ENCODE measurements at regions of chr10 and their contacts with region 1.

Region 1: GRCh38 chr10:122435212-122435827 is 19.1 kb upstream of the ARMS2 start:
- DNase-seq: no peak
- H3K4me3 ChIP-seq: no peak overlapping the region
- H3K27ac ChIP-seq: no peak overlapping the region
- H3K4me1 ChIP-seq: no peaks in the 10 kb centered on the region
- H3K27me3 ChIP-seq: no peaks in the 10 kb centered on the region
- CTCF ChIP-seq: peak; percentile 35 to 70 (median 63)
- EP300 ChIP-seq: no peak
- POLR2A ChIP-seq: no peak

Region 2: GRCh38 chr10:122298598-122299301 is 136.6 kb before region 1 on chr10:
- intact Hi-C with region 1: loop called in 3 of 4 experiments (anchors 5 kb)
- DNase-seq: peak; percentile 69 to 87 (median 84)
- H3K4me3 ChIP-seq: peak overlapping the region; percentile 21
- H3K27ac ChIP-seq: no peak overlapping the region
- H3K4me1 ChIP-seq: no peaks in the 10 kb centered on the region
- H3K27me3 ChIP-seq: no peaks in the 10 kb centered on the region
- CTCF ChIP-seq: peak; percentile 69 to 86 (median 85)
- EP300 ChIP-seq: no peak
- POLR2A ChIP-seq: no peak

Region 3: DNA sequence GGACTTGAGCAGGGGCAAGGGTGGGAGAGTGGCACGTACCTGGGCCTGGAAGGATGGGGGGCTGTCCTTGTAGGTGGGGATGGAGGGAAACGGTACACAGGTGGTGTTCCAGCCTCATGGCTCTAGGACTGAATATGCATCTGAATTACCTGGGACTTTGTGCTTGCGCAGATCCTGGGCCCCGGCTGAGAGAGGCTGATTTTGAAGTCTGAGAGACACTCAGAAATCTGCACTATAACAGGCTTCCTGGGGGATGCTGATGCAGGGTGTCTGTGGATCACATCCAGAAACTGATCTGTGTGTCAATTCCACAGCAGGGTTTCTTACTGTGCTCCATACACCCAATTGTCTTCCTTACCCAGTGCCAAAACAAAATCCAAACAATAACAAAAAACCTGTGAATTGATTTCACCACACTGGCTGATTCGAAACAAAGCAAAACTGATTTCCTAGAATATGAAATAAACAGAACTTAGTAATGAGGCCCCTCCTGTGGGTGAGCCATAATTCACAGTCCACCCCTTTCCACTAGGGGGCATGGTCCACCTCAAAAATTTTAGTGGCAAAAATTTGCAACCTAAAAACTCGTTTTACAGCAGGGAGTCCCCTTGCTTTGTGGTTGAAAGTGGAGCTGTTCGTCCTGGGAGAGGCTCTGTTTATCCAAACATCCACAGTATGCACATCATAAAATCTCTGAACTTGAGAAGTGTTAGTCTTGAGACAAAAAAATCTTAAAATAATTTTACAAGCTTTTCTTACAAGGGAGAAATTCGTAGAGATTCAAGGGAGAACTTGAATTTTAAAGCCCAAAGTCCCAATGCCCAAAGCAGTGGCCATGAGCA is 92.8 kb before region 1 on chr10:
- intact Hi-C with region 1: loop called in 2 of 4 experiments (anchors 5 to 10 kb)
- DNase-seq: peak; percentile 39 to 72 (median 53)
- H3K4me3 ChIP-seq: no peak overlapping the region
- H3K27ac ChIP-seq: peak overlapping the region in 1 of 2 donors; percentile 38
- H3K4me1 ChIP-seq: peaks cover 4% of the 10 kb centered on the region
- H3K27me3 ChIP-seq: no peaks in the 10 kb centered on the region
- CTCF ChIP-seq: peak; percentile 43 to 72 (median 62)
- EP300 ChIP-seq: no peak
- POLR2A ChIP-seq: no peak

Region 4: DNA sequence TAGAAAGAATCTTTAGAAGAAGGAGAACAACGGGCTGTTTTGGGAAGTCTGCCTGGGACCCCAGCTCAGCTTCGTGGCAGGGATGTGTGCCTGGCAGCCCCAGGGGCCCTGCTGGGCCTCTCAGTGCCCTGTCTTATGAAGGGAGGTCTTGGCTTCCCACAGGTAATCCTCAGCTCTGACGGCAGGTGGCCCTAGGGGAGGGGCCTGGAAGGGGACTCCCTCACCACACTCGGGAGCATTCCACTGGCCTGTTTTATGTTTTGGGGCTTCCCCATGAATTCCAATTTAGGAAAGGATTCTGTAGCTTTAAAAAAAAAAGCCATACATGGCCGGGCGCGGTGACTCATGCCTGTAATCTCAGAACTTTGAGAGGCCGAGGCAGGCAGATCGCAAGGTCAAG is 122.2 kb after region 1 on chr10:
- intact Hi-C with region 1: loop called in 3 of 4 experiments (anchors 5 to 10 kb)
- DNase-seq: no peak
- H3K4me3 ChIP-seq: no peak overlapping the region
- H3K27ac ChIP-seq: no peak overlapping the region
- H3K4me1 ChIP-seq: no peaks in the 10 kb centered on the region
- H3K27me3 ChIP-seq: no peaks in the 10 kb centered on the region
- CTCF ChIP-seq: no peak
- EP300 ChIP-seq: no peak
- POLR2A ChIP-seq: no peak

Region 5: DNA sequence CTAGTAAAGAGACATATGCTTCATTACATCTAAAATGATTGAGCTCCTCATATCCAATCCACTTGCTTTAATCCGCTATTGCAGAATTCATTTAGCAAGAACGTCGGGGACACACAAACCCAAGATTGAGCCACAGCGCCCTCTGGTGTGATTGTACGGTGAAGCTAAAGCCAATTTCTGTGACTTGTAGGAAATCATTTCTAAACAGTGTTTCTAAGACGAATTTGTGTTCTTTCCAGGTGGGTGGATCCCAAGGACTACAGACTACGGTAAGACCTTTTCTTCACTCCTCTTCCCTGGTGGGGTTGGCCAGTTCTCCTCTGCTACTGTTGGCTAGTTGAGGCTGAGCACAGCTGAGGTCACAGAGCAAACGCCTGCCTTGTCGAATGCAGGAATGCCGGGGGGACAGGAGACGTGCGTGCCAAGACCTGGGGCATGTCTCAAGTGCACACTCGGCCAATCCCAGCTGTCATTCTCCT is 130.4 kb after region 1 on chr10:
- intact Hi-C with region 1: loop called in 3 of 4 experiments (anchors 2 to 10 kb)
- DNase-seq: peak; percentile 73 to 88 (median 86)
- H3K4me3 ChIP-seq: no peak overlapping the region
- H3K27ac ChIP-seq: no peak overlapping the region
- H3K4me1 ChIP-seq: peaks cover 1% of the 10 kb centered on the region
- H3K27me3 ChIP-seq: no peaks in the 10 kb centered on the region
- CTCF ChIP-seq: peak; percentile 59 to 80 (median 78)
- EP300 ChIP-seq: no peak
- POLR2A ChIP-seq: no peak

Region 6: DNA sequence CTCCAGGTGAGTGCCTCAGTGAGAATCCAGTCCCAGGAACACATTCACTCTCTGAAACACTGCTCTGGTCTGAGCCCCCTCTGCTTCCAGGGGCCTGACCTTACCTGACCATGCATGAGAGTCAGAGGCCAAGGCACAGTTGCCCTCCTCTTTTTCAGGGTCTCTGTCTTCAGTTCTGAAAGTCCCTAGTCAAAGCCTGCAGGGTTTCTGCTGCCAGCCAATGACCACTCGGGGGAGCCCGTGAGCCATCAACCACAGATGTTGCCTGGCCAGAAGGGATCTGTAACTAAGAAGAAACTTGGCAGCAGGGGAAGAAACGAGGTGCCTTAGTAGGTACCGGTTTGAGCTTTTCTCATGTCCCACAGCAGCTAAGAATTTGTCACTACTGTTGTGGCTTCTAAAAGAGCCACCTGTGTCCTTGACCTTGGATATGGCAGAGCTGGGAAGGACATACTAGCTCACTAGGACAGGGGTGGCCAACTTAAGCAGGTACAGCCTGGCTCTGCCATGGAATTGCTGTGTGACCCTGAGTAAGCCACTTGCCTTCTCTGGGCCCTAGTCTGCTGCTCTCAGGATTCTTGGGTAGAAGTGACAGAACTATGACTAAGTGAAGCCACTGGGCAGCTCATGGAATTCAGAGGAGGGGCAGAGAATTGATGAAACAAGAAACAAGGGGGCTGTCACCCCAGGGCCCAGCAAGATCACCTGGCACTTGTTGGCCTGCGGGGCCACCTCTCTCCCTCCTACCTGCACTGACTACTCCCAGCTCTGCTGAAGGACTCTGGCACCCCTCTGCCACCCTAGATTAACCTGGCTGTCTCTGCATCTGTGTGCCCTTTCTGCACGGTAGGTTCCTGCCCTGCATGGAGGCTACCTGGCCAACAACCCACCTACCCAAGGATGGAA is 1147.0 kb after region 1 on chr10:
- intact Hi-C with region 1: loop called in 1 of 4 experiments (anchors 5 kb)
- DNase-seq: peak; percentile 38 to 84 (median 69)
- H3K4me3 ChIP-seq: no peak overlapping the region
- H3K27ac ChIP-seq: no peak overlapping the region
- H3K4me1 ChIP-seq: no peaks in the 10 kb centered on the region
- H3K27me3 ChIP-seq: no peaks in the 10 kb centered on the region
- CTCF ChIP-seq: peak in 2 of 3 donors; percentile 39 to 62
- EP300 ChIP-seq: no peak
- POLR2A ChIP-seq: no peak